ENCODE measurements at regions of chr7 and their contacts with region 1.

Region 1: DNA sequence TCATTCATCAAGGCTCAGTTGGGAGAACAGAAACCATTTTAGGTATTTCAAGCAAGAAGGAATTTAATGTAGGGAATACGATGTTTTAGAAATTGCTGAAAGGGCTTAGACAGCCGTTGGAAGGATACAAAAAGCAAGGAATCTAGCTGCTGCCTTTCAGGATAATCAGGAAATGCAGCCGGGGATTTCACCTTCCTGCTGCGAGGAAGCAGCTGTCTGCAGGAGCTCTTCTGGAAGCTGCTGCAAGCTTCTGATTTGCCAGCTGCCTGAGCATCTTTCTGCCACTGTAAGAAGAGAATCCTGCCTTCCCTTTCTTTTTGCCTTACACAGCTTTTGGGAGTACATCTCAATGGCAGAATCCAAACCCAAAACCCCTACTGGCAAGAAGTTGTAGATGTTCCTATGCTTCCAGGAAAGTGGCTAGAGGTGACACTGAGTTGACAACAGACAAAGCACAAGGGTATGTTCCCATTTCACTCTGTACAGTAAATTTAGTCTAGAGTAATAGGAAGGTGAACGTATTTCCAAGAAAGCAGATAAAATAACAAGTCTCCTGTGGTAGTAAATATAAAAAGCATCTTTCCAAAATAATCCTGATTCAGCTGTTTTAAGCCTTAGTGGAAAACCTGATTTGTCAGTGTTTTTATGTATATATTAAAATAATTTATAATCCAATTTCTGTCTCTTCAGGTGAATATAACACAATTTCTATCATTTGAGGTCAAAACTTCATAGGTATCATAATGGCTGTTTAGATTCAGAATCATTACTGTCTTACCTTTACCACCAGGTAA is 148.4 kb upstream of the LRGUK start:
- DNase-seq: no peak
- H3K4me3 Mint-ChIP-seq: no peak overlapping the region
- H3K27ac Mint-ChIP-seq: no peak overlapping the region
- H3K4me1 Mint-ChIP-seq: no peaks in the 10 kb centered on the region
- H3K27me3 Mint-ChIP-seq: no peaks in the 10 kb centered on the region
- CTCF ChIP-seq: no peak

Region 2: GRCh38 chr7:133633062-133633461 is 345.6 kb before region 1 on chr7:
- CTCF ChIA-PET with region 1: no interaction called
- POLR2A ChIA-PET with region 1: no interaction called
- intact Hi-C with region 1: loop called (anchors 5 kb)
- DNase-seq: peak; percentile 62
- H3K4me3 Mint-ChIP-seq: peak overlapping the region; percentile 25
- H3K27ac Mint-ChIP-seq: peak overlapping the region; percentile 42
- H3K4me1 Mint-ChIP-seq: peaks cover 14% of the 10 kb centered on the region
- H3K27me3 Mint-ChIP-seq: no peaks in the 10 kb centered on the region
- CTCF ChIP-seq: no peak

Region 3: DNA sequence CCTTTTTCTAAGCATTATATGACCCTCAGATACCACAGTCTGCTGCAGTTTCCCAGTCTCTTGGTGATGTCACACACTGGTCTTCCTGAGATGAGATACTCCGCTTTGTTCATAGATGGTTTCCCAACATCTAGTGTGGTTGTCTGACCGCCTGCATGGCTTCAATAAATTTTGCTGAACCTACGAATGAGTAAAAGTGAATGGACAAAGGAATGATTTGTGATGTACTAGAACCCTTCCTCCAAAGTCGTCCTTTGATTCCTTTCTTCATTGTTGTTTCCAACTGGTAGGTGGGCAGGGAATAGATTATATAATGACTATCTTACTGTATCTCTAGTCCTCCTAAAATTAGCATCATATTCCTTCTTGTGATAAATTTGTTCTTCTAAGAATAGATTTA is 255.5 kb after region 1 on chr7:
- CTCF ChIA-PET with region 1: no interaction called
- POLR2A ChIA-PET with region 1: no interaction called
- intact Hi-C with region 1: no loop called
- DNase-seq: no peak
- H3K4me3 Mint-ChIP-seq: no peak overlapping the region
- H3K27ac Mint-ChIP-seq: no peak overlapping the region
- H3K4me1 Mint-ChIP-seq: no peaks in the 10 kb centered on the region
- H3K27me3 Mint-ChIP-seq: peaks cover 42% of the 10 kb centered on the region
- CTCF ChIP-seq: no peak